CD4-positive, alpha-beta T cell (primary cell): ENCODE measurements at regions of chr17 and their contacts with region 1.

Region 1: DNA sequence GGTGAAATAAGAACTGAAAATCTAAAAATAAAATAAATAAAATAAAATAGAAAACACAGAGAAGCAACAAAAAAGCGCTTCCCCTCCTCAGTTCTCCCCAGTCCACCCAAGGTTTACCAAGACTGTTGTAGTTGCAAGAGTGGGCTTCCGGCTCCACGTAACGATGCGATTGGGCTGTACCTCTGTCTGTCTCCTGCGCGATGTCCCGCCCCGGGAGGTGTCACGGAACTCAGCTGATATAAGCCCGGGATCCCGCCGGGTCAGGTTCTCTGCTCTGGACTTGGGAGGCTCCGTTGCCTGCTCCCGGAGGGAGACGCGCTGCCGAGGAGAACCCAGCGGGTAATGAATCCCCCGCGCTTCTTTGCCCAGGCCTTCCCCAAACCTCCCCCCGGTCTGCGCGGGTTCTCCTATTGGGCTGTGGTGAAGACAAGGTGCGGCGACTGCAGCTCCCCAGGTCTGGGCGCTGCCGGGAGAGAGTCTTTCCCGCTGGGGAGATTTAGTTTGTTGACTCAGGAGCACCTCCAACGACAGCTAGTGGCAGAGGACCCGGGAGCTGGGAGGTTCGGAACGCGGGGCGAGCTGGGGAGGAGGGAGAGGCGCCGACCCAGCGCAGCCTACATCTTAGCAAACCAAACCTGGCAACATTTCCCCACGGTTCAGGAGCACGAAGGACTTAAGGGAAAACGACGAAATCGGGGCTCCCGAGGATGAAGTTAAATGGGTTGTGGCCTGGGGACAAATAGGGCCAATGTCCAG is at the start of gene SLFN5:
- DNase-seq: peak; percentile 89 to 97 (median 94)
- ATAC-seq: peak; percentile 79
- H3K4me3 ChIP-seq: peak within 1 kb of the TSS; percentile 99
- H3K4me3 Mint-ChIP-seq: peak within 1 kb of the TSS; percentile 99
- H3K27ac ChIP-seq: peak within 1 kb of the TSS; percentile 92 to 99
- H3K27ac Mint-ChIP-seq: peak within 1 kb of the TSS; percentile 100
- H3K4me1 ChIP-seq: peaks cover 42% of the 10 kb centered on the region
- H3K4me1 Mint-ChIP-seq: peaks cover 61% of the 10 kb centered on the region
- H3K27me3 ChIP-seq: no peaks in the 10 kb centered on the region
- H3K27me3 Mint-ChIP-seq: no peaks in the 10 kb centered on the region
- CTCF ChIP-seq: no peak
- total RNA-seq, gene SLFN5: 28.5 to 32.7 TPM

Region 2: DNA sequence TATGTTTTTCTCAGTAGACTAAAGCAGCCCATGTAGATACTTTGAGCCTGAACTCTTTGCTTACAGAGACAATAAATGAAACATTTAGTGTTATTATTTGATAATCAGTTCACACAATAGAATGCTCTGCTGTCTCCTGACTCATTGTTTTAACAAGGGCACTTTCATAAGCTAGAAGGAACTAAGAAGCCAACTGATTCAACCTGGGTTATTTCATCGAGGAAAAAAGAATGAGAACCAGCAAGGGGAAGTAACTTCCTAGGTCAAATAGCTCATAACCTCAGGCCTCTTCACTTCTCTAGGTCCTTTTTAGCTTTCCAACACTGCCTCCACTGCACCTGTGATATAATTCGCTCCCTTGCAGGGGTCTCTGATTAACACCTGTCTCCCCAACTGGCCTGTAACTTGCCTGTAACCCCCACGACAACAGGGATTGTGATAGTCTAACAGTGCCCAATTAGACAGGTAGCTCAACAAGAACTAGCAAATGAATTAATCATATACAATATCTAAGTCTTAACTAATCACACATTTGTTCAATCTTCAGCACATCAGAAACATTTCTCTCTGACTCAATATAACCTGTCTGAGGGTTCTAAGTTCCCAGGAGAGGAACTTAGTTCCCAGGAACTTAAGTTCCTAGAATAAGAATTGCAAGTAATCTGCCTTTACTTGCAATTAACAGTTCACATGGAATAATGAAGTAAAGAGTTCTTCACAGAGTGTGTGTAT is 214.3 kb before region 1 on chr17:
- CTCF ChIA-PET with region 1: no interaction called
- POLR2A ChIA-PET with region 1: no interaction called
- intact Hi-C with region 1: no loop called
- DNase-seq: no peak
- ATAC-seq: no peak
- H3K4me3 ChIP-seq: no peak overlapping the region
- H3K4me3 Mint-ChIP-seq: no peak overlapping the region
- H3K27ac ChIP-seq: peak overlapping the region in 1 of 2 donors; percentile 27
- H3K27ac Mint-ChIP-seq: peak overlapping the region; percentile 68
- H3K4me1 ChIP-seq: peaks cover 16% of the 10 kb centered on the region
- H3K4me1 Mint-ChIP-seq: peaks cover 54% of the 10 kb centered on the region
- H3K27me3 ChIP-seq: no peaks in the 10 kb centered on the region
- H3K27me3 Mint-ChIP-seq: no peaks in the 10 kb centered on the region
- CTCF ChIP-seq: no peak

Region 3: GRCh38 chr17:35135322-35135721 is 107.7 kb before region 1 on chr17:
- CTCF ChIA-PET with region 1: no interaction called
- POLR2A ChIA-PET with region 1: no interaction called
- intact Hi-C with region 1: no loop called
- DNase-seq: no peak
- ATAC-seq: no peak
- H3K4me3 ChIP-seq: no peak overlapping the region
- H3K4me3 Mint-ChIP-seq: no peak overlapping the region
- H3K27ac ChIP-seq: no peak overlapping the region
- H3K27ac Mint-ChIP-seq: no peak overlapping the region
- H3K4me1 ChIP-seq: peaks cover 8% of the 10 kb centered on the region
- H3K4me1 Mint-ChIP-seq: no peaks in the 10 kb centered on the region
- H3K27me3 ChIP-seq: no peaks in the 10 kb centered on the region
- H3K27me3 Mint-ChIP-seq: no peaks in the 10 kb centered on the region
- CTCF ChIP-seq: no peak

Region 4: GRCh38 chr17:35189291-35189690 is 53.7 kb before region 1 on chr17:
- CTCF ChIA-PET with region 1: interaction called, 3 read pairs
- POLR2A ChIA-PET with region 1: interaction called, 10 read pairs
- intact Hi-C with region 1: no loop called
- DNase-seq: peak in 1 of 14 experiments; percentile 32
- ATAC-seq: no peak
- H3K4me3 ChIP-seq: no peak overlapping the region
- H3K4me3 Mint-ChIP-seq: peak overlapping the region; percentile 69
- H3K27ac ChIP-seq: peak overlapping the region in 1 of 2 donors; percentile 10
- H3K27ac Mint-ChIP-seq: peak overlapping the region; percentile 90
- H3K4me1 ChIP-seq: peaks cover 31% of the 10 kb centered on the region
- H3K4me1 Mint-ChIP-seq: peaks cover 82% of the 10 kb centered on the region
- H3K27me3 ChIP-seq: no peaks in the 10 kb centered on the region
- H3K27me3 Mint-ChIP-seq: no peaks in the 10 kb centered on the region
- CTCF ChIP-seq: no peak

Region 5: DNA sequence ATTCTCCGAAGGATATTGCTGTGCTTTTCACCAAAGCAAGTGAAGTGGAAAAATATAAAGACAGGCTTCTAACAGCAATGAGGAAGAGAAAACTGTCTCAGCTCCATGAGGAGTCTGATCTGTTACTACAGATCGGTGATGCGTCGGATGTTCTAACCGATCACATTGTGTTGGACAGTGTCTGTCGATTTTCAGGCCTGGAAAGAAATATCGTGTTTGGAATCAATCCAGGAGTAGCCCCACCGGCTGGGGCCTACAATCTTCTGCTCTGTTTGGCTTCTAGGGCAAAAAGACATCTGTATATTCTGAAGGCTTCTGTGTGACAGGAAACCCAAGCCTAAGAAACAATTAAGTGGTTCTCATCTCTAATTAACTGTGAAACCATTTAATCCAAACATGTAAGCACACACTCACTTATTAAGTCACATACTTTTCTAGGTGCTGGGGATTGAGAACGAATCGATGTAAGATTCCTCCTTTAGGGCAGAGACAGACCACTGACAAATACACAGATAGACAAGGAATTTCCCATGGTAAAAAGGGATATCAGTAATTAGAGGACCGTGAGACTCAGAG is 22.7 kb after region 1 on chr17:
- CTCF ChIA-PET with region 1: no interaction called
- POLR2A ChIA-PET with region 1: interaction called, 11 read pairs
- intact Hi-C with region 1: no loop called
- DNase-seq: no peak
- ATAC-seq: no peak
- H3K4me3 ChIP-seq: no peak overlapping the region
- H3K4me3 Mint-ChIP-seq: no peak overlapping the region
- H3K27ac ChIP-seq: peak overlapping the region in 1 of 2 donors; percentile 6
- H3K27ac Mint-ChIP-seq: peak overlapping the region; percentile 81
- H3K4me1 ChIP-seq: peaks cover 51% of the 10 kb centered on the region
- H3K4me1 Mint-ChIP-seq: peaks cover 77% of the 10 kb centered on the region
- H3K27me3 ChIP-seq: no peaks in the 10 kb centered on the region
- H3K27me3 Mint-ChIP-seq: no peaks in the 10 kb centered on the region
- CTCF ChIP-seq: no peak

Region 6: GRCh38 chr17:35404360-35404759 is 161.4 kb after region 1 on chr17:
- CTCF ChIA-PET with region 1: no interaction called
- POLR2A ChIA-PET with region 1: no interaction called
- intact Hi-C with region 1: no loop called
- DNase-seq: peak in 1 of 14 experiments; percentile 12
- ATAC-seq: no peak
- H3K4me3 ChIP-seq: no peak overlapping the region
- H3K4me3 Mint-ChIP-seq: no peak overlapping the region
- H3K27ac ChIP-seq: no peak overlapping the region
- H3K27ac Mint-ChIP-seq: no peak overlapping the region
- H3K4me1 ChIP-seq: no peaks in the 10 kb centered on the region
- H3K4me1 Mint-ChIP-seq: peaks cover 6% of the 10 kb centered on the region
- H3K27me3 ChIP-seq: no peaks in the 10 kb centered on the region
- H3K27me3 Mint-ChIP-seq: no peaks in the 10 kb centered on the region
- CTCF ChIP-seq: no peak

Region 7: DNA sequence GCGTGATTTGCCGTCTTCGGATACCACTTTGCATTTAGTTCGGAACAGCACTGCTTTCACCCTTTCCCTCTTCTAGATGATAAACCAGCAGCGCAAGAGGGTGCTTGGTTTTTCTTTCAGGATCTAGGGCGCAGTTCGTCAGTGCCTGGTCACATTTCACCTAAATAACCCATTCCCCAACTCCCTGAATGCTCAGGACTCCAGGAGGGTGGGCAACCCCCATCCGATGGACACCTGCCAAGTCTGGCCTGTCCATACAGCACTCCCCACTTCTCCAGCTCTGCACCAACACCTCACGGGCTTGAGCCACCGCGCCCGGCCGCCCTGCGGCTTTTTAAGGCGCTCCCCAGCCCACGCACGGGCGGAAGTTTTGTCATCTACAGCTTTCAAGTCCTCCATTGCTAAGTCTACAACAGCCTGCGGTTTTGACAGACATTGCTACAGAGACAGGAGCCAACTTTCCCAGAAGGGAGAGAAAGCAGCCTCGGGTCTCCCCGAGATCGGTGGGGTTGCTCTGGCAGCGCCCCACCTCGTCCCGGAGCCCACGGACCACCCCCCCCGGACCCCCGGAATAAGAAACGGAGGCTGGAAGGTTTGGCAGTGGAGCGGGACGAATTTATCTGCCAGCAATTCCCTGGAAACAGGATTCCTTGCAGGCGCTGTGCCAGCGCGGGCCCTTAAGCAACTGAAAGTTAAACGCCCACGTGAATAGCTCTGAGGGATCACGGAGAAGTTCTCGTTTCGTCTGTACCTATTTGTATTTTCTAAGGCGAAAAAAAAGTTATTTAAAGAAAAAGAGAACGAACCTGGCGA is 244.1 kb after region 1 on chr17:
- CTCF ChIA-PET with region 1: no interaction called
- POLR2A ChIA-PET with region 1: interaction called, 53 read pairs
- intact Hi-C with region 1: no loop called
- DNase-seq: peak; percentile 35 to 89 (median 69)
- ATAC-seq: peak; percentile 72
- H3K4me3 ChIP-seq: peak overlapping the region; percentile 89
- H3K4me3 Mint-ChIP-seq: peak overlapping the region; percentile 95
- H3K27ac ChIP-seq: peak overlapping the region; percentile 76 to 82
- H3K27ac Mint-ChIP-seq: peak overlapping the region; percentile 96
- H3K4me1 ChIP-seq: peaks cover 38% of the 10 kb centered on the region
- H3K4me1 Mint-ChIP-seq: peaks cover 60% of the 10 kb centered on the region
- H3K27me3 ChIP-seq: no peaks in the 10 kb centered on the region
- H3K27me3 Mint-ChIP-seq: no peaks in the 10 kb centered on the region
- CTCF ChIP-seq: no peak

Region 8: GRCh38 chr17:35587074-35587971 is 344.3 kb after region 1 on chr17 and contains the start of gene AP2B1:
- CTCF ChIA-PET with region 1: no interaction called
- POLR2A ChIA-PET with region 1: interaction called, 11 read pairs
- intact Hi-C with region 1: no loop called
- DNase-seq: peak; percentile 89 to 100 (median 96)
- ATAC-seq: peak; percentile 98
- H3K4me3 ChIP-seq: peak within 1 kb of the TSS; percentile 99
- H3K4me3 Mint-ChIP-seq: peak within 1 kb of the TSS; percentile 96
- H3K27ac ChIP-seq: peak within 1 kb of the TSS; percentile 87 to 98
- H3K27ac Mint-ChIP-seq: peak within 1 kb of the TSS; percentile 97
- H3K4me1 ChIP-seq: peaks cover 27% of the 10 kb centered on the region
- H3K4me1 Mint-ChIP-seq: peaks cover 40% of the 10 kb centered on the region
- H3K27me3 ChIP-seq: no peaks in the 10 kb centered on the region
- H3K27me3 Mint-ChIP-seq: no peaks in the 10 kb centered on the region
- CTCF ChIP-seq: no peak
- total RNA-seq, gene AP2B1: 67.0 to 69.2 TPM